HepG2 (cell line): ENCODE measurements at regions of chr13 and their contacts with region 1.

Region 1: DNA sequence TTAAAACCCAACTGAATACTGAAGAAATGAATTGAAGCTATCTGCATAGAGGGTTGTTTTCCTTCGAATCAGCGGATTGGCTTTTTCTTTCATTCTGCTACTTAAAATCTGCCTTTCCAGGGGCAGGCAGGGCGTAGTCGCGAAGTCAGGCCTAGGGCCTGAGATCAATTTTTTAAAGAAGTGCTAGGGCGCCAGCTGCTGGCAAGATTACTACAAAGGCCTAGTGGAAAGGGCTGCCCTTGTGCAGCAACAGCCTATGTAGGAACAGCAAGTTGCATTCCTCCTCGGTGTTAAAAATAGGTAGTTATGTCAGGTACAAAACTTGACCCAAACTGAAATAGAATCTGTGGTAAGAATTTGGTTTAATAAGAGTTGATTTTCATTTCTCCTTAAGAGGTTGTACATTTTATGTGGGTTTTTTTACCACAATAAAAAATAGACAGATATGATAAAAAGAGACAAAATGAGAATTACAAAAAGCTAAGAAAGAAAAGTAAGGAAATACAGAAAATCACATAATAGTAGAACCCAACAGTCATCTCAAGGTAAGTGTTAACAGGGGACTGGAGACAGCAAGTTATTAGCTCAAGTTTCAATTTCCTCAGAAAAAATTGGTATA is 9.5 kb upstream of the URAD start:
- DNase-seq: peak; percentile 48
- ATAC-seq: peak; percentile 94
- H3K4me3 ChIP-seq: no peak overlapping the region
- H3K27ac ChIP-seq: no peak overlapping the region
- H3K4me1 ChIP-seq: peaks cover 8% of the 10 kb centered on the region; the same call in 1 of the 2 replicates
- H3K27me3 ChIP-seq: no peaks in the 10 kb centered on the region
- CTCF ChIP-seq: peak; percentile 78
- EP300 ChIP-seq: no peak
- POLR2A ChIP-seq: no peak
- RAD21 ChIP-seq: peak; percentile 58; the same call in 1 of the 2 replicates

Region 2: GRCh38 chr13:27374650-27375049 is 623.4 kb before region 1 on chr13:
- CTCF ChIA-PET with region 1: no interaction called
- POLR2A ChIA-PET with region 1: no interaction called
- in situ Hi-C with region 1: no loop called
- intact Hi-C with region 1: loop called (anchors 5 kb)
- DNase-seq: peak; percentile 74
- ATAC-seq: peak; percentile 80
- H3K4me3 ChIP-seq: peak overlapping the region in 1 of 3 experiments; percentile 33; a peak in 1 of 6 replicates
- H3K27ac ChIP-seq: no peak overlapping the region
- H3K4me1 ChIP-seq: peaks cover 42% of the 10 kb centered on the region
- H3K27me3 ChIP-seq: peaks cover 0 to 17% of the 10 kb centered on the region in 2 experiments; a peak in 4 of 5 replicates
- CTCF ChIP-seq: peak; percentile 87
- EP300 ChIP-seq: no peak
- POLR2A ChIP-seq: no peak
- RAD21 ChIP-seq: peak; percentile 73

Region 3: GRCh38 chr13:27481766-27482165 is 516.2 kb before region 1 on chr13:
- CTCF ChIA-PET with region 1: no interaction called
- POLR2A ChIA-PET with region 1: no interaction called
- in situ Hi-C with region 1: loop called (anchors 25 kb)
- intact Hi-C with region 1: no loop called
- DNase-seq: peak; percentile 37
- ATAC-seq: peak; percentile 58
- H3K4me3 ChIP-seq: no peak overlapping the region
- H3K27ac ChIP-seq: no peak overlapping the region
- H3K4me1 ChIP-seq: peaks cover 14% of the 10 kb centered on the region
- H3K27me3 ChIP-seq: no peaks in the 10 kb centered on the region
- CTCF ChIP-seq: peak; percentile 79
- EP300 ChIP-seq: no peak
- POLR2A ChIP-seq: no peak
- RAD21 ChIP-seq: no peak; the same call in 1 of the 2 replicates

Region 4: GRCh38 chr13:27905650-27906049 is 92.4 kb before region 1 on chr13:
- CTCF ChIA-PET with region 1: no interaction called
- POLR2A ChIA-PET with region 1: no interaction called
- in situ Hi-C with region 1: no loop called
- intact Hi-C with region 1: no loop called
- DNase-seq: no peak
- ATAC-seq: no peak
- H3K4me3 ChIP-seq: no peak overlapping the region
- H3K27ac ChIP-seq: no peak overlapping the region
- H3K4me1 ChIP-seq: peaks cover 9% of the 10 kb centered on the region
- H3K27me3 ChIP-seq: peaks cover 0 to 1% of the 10 kb centered on the region in 2 experiments; a peak in 1 of 5 replicates
- CTCF ChIP-seq: no peak
- EP300 ChIP-seq: no peak
- POLR2A ChIP-seq: no peak
- RAD21 ChIP-seq: no peak

Region 5: GRCh38 chr13:27980280-27980998 is 17.6 kb before region 1 on chr13:
- CTCF ChIA-PET with region 1: no interaction called
- POLR2A ChIA-PET with region 1: no interaction called
- in situ Hi-C with region 1: no loop called
- intact Hi-C with region 1: no loop called
- DNase-seq: no peak
- ATAC-seq: peak; percentile 63
- H3K4me3 ChIP-seq: peak overlapping the region in 1 of 3 experiments; percentile 45; a peak in 1 of 6 replicates
- H3K27ac ChIP-seq: no peak overlapping the region
- H3K4me1 ChIP-seq: peaks cover 13% of the 10 kb centered on the region
- H3K27me3 ChIP-seq: peaks cover 9 to 54% of the 10 kb centered on the region in 2 experiments
- CTCF ChIP-seq: no peak
- EP300 ChIP-seq: no peak
- POLR2A ChIP-seq: no peak
- RAD21 ChIP-seq: no peak